Activated CD4-positive, alpha-beta memory T cell treated with anti-CD3 and anti-CD28 coated beads for 36 hours (primary cell): ENCODE measurements at regions of chr21 and their contacts with region 1.

Region 1: GRCh38 chr21:33238565-33239255 is 9.0 kb downstream of the IFNAR2 start:
- DNase-seq: peak; percentile 43
- H3K4me3 Mint-ChIP-seq: peak overlapping the region; percentile 40
- H3K27ac Mint-ChIP-seq: peak overlapping the region; percentile 83
- H3K4me1 Mint-ChIP-seq: peaks cover 81% of the 10 kb centered on the region
- H3K27me3 Mint-ChIP-seq: no peaks in the 10 kb centered on the region

Region 2: DNA sequence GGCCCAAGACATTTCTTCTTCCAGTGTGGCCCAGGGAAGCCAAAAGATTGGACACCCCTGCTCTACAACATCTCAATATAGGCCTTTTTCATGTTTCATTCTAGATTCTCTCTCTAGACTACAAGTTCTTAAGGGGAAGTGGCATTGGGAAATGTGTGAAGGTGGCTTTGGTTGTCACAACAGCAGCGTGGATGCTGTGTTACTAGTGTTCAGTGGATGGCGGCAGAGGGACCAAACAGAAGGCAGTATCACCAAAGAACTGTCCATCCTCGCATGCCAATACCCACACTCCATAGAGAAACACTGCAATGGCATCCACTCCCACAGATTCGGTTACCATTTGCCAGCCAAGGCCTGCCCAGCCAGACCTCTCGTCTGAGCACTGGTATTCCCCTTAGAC is 33.2 kb before region 1 on chr21:
- CTCF ChIA-PET with region 1: no interaction called
- POLR2A ChIA-PET with region 1: no interaction called
- intact Hi-C with region 1: loop called (anchors 2 kb)
- DNase-seq: peak; percentile 36
- H3K4me3 Mint-ChIP-seq: peak overlapping the region; percentile 63
- H3K27ac Mint-ChIP-seq: peak overlapping the region; percentile 88
- H3K4me1 Mint-ChIP-seq: peaks cover 34% of the 10 kb centered on the region
- H3K27me3 Mint-ChIP-seq: no peaks in the 10 kb centered on the region

Region 3: DNA sequence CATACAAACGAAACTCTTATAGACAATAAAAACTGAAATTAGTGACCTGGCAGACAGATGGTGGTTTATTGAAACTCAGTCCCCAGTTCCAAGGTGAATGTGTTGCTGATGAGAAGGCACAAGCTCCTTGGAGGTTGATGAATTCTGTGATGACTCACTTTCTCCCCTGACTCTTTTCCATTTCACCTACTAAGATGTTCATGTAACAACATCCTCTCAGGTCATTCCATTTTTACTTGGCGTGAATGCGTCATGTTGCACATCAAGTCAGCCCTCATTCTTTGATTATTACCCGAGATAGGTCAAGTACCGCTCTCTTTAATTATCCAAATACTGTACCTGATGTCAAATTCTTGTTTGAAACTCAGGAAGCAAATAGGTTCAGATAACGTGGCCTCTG is 17.3 kb after region 1 on chr21:
- CTCF ChIA-PET with region 1: no interaction called
- POLR2A ChIA-PET with region 1: interaction called, 10 read pairs
- intact Hi-C with region 1: loop called (anchors 1 kb)
- DNase-seq: peak; percentile 49
- H3K4me3 Mint-ChIP-seq: peak overlapping the region; percentile 8
- H3K27ac Mint-ChIP-seq: peak overlapping the region; percentile 71
- H3K4me1 Mint-ChIP-seq: peaks cover 65% of the 10 kb centered on the region
- H3K27me3 Mint-ChIP-seq: no peaks in the 10 kb centered on the region

Region 4: DNA sequence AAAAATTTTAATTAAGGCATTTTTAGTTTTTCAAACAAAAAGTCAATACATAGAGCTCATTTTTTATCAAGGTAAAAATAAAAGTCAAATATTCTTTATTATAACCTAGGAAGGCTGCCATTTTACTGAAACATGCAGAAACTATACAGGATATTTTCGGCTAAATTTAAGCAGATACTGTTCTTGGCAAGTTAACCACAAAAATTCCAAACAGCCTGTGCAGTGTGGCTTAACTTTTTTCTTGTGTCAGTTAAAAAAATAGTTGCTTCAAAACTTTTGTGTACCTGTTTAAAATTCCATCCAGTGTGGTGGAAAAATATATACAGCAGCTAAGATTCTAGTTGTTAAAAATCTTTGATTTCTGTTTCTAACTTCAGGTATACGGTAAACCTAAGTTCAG is 541.9 kb after region 1 on chr21:
- CTCF ChIA-PET with region 1: no interaction called
- POLR2A ChIA-PET with region 1: no interaction called
- intact Hi-C with region 1: no loop called
- DNase-seq: no peak
- H3K4me3 Mint-ChIP-seq: no peak overlapping the region
- H3K27ac Mint-ChIP-seq: no peak overlapping the region
- H3K4me1 Mint-ChIP-seq: no peaks in the 10 kb centered on the region
- H3K27me3 Mint-ChIP-seq: no peaks in the 10 kb centered on the region